Heart left ventricle (tissue), 16 donors: ENCODE measurements at regions of chr6 and their contacts with region 1.

Region 1: GRCh38 chr6:90296346-90297114 is at the start of gene BACH2:
- DNase-seq: peak; percentile 90 to 92 (median 91)
- ATAC-seq: peak; percentile 76 to 83 (median 82)
- H3K4me3 ChIP-seq: peak within 1 kb of the TSS; percentile 66 to 93 (median 80)
- H3K27ac ChIP-seq: peak within 1 kb of the TSS; percentile 67 to 93 (median 84)
- H3K4me1 ChIP-seq: peaks cover 0 to 17% (median 7%) of the 10 kb centered on the region in 12 donors
- H3K27me3 ChIP-seq: peaks cover 0 to 30% (median 0%) of the 10 kb centered on the region in 9 donors
- CTCF ChIP-seq: peak in 6 of 12 donors; percentile 11 to 34 (median 24)
- POLR2A ChIP-seq: peak in 1 of 2 donors; percentile 49
- total RNA-seq, gene BACH2: 0.76 to 8.4 (median 4.0) TPM

Region 2: DNA sequence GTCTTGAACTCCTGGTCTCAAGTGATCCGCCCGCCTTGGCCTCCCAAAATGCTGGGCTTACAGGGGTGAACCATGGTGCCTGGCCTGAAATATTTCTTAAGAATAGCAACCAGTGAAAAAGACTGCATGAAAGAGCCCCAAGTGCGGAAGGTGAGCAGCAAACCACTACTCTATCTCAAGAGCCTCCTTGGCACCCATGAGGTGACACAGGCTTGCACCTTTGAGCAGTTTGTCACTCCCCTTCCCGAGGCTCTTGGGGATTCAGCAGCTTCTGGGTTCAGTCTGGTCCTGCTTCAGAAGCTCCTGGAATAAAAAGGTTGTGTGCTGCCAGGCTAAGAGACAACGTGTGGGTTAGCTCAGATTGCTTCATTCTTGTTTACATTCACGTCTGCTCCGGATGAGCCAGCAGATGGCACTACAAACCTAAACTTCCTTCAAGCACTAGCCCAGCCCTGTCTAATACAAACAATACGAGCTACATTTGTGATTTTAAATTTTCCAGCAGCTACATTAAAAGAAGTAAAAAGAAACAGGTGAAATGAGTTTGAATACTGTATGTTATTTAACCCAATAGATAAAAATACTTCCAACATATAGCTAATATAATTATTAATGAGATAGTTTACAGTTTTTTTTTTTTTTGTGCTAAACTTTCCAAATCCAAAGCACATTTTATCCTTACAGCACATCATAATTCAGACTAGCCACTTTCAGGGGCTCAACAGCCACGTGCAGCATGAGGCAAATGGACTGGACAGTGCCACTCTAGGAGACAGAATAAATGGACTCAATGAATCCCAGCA is 356.1 kb before region 1 on chr6:
- intact Hi-C with region 1: loop called in 1 of 10 experiments (anchors 10 kb)
- DNase-seq: peak in 4 of 5 donors; percentile 56 to 60 (median 59)
- ATAC-seq: peak; percentile 83 to 92 (median 90)
- H3K4me3 ChIP-seq: no peak overlapping the region
- H3K27ac ChIP-seq: no peak overlapping the region
- H3K4me1 ChIP-seq: peaks cover 0 to 8% (median 0%) of the 10 kb centered on the region in 12 donors
- H3K27me3 ChIP-seq: no peaks in the 10 kb centered on the region
- CTCF ChIP-seq: peak; percentile 46 to 81 (median 70)
- POLR2A ChIP-seq: no peak

Region 3: GRCh38 chr6:89984926-89985750 is 311.4 kb before region 1 on chr6:
- intact Hi-C with region 1: loop called in 1 of 10 experiments (anchors 5 kb)
- DNase-seq: peak; percentile 89 to 94 (median 91)
- ATAC-seq: peak; percentile 88 to 96 (median 89)
- H3K4me3 ChIP-seq: peak overlapping the region in 1 of 12 donors; percentile 4
- H3K27ac ChIP-seq: peak overlapping the region in 10 of 12 donors; percentile 22 to 76 (median 67)
- H3K4me1 ChIP-seq: peaks cover 0 to 29% (median 23%) of the 10 kb centered on the region in 12 donors
- H3K27me3 ChIP-seq: no peaks in the 10 kb centered on the region
- CTCF ChIP-seq: no peak
- POLR2A ChIP-seq: no peak

Region 4: DNA sequence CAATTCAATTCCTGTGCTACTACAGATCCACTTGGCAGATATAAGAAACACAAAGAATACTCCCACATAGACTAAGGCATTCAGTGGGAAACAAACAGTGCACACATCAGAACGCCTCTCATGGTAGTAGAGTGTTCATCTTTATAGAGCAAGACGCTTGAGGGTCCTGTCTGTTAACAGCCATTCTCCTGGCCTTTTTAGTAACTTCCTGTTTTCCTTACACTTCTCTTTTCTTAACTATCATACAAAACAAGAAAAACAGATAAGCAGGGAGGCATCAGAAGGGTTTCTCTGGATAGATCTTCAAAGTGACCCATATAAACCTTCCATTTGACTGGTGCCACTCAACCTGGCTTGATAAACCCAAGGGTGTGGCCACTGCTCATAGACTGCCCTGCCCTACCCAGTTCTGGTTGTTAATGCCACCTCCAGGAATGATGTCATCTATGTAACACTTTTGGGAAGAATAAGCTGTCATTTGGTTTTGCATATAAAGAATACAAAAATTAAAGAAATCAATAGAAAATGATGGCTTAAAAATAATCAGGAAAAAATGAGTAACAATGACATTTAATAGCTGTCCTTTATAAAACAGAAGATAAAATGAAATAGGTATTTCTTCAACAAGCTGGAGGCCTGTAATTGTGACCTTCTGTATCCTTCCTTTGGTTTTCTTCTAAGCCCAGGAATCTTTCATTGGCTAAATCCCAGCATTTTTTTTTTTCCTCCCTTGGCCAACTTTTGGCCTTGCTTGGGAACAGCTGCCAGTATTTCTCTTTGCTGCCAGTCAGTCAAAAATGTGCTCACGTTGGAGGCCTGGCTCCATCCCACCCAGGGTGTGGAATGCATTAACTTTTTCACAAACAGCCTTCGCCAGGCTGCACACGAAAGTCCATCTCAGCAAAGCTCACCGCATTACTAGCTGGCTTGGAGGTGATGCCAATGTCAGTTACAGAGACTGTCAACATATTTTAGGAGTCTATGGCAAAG is 298.8 kb before region 1 on chr6:
- intact Hi-C with region 1: no loop called
- DNase-seq: no peak
- ATAC-seq: peak in 2 of 4 donors; percentile 18 to 36
- H3K4me3 ChIP-seq: no peak overlapping the region
- H3K27ac ChIP-seq: no peak overlapping the region
- H3K4me1 ChIP-seq: peaks cover 0 to 39% (median 23%) of the 10 kb centered on the region in 12 donors
- H3K27me3 ChIP-seq: no peaks in the 10 kb centered on the region
- CTCF ChIP-seq: no peak
- POLR2A ChIP-seq: no peak

Region 5: DNA sequence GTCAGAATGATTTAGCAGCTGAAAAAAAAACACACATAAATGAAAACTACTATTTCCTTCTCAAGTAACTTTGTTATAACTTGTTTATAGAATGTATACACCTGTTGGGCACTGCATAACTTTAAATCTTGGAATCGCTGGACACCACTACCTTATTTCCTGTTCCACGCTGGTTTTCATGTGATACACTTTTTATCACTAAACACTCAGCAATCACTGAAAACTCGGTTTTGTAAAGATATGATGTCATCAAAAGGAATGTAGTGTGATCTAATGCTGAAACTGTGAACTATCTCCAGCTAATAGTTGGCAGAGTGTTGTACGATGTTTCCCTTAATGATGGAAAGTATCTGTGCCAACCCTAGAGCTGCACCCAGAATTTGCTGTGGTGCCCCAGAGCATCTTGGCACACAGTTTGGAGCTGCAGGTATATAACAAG is 127.8 kb before region 1 on chr6:
- intact Hi-C with region 1: loop called in 1 of 10 experiments (anchors 5 kb)
- DNase-seq: no peak
- ATAC-seq: peak in 3 of 4 donors; percentile 52 to 65 (median 56)
- H3K4me3 ChIP-seq: no peak overlapping the region
- H3K27ac ChIP-seq: peak overlapping the region in 10 of 12 donors; percentile 45 to 78 (median 69)
- H3K4me1 ChIP-seq: peaks cover 0 to 19% (median 12%) of the 10 kb centered on the region in 12 donors
- H3K27me3 ChIP-seq: no peaks in the 10 kb centered on the region
- CTCF ChIP-seq: no peak
- POLR2A ChIP-seq: no peak

Region 6: DNA sequence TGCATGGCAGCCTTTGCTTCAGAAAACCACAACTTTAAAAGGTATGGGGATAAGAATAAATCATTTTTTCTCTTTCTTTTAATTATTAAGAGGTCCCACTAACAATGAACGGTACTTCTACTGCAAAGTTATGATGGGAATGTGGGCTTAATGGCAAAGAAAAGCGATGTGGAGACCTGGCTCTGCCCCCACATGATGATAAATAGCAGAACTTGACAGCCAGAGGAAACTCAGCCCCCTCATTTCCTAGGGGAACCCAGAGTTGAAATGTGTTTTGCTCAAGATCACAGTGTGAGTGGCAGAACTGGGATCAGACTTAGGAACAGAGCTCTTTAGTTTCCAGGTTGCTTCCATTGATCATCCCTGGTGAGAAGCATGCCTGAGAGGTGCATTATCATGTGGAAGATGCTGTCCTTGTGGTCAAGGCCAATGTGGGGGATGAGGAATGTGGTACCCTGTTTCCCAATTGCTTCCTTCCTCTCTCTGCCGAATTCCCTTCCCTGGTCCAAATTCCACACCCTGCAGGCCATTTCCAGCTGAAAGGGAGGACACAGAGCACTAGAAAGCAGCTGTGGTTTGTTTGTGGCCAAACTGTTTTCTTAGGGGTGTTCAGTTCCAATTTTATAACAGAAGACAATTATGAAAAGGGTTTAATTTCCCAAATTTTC is 65.8 kb before region 1 on chr6:
- intact Hi-C with region 1: loop called in 2 of 10 experiments (anchors 5 to 10 kb)
- DNase-seq: no peak
- ATAC-seq: peak in 3 of 4 donors; percentile 40 to 52 (median 52)
- H3K4me3 ChIP-seq: no peak overlapping the region
- H3K27ac ChIP-seq: peak overlapping the region in 3 of 12 donors; percentile 16 to 38 (median 26)
- H3K4me1 ChIP-seq: peaks cover 0 to 48% (median 24%) of the 10 kb centered on the region in 12 donors
- H3K27me3 ChIP-seq: no peaks in the 10 kb centered on the region
- CTCF ChIP-seq: no peak
- POLR2A ChIP-seq: no peak

Region 7: GRCh38 chr6:90393232-90393884 is 96.8 kb after region 1 on chr6:
- intact Hi-C with region 1: loop called in 3 of 10 experiments (anchors 5 kb)
- DNase-seq: peak in 3 of 5 donors; percentile 43 to 53 (median 51)
- ATAC-seq: peak; percentile 62 to 77 (median 72)
- H3K4me3 ChIP-seq: no peak overlapping the region
- H3K27ac ChIP-seq: no peak overlapping the region
- H3K4me1 ChIP-seq: peaks cover 0 to 11% (median 0%) of the 10 kb centered on the region in 12 donors
- H3K27me3 ChIP-seq: no peaks in the 10 kb centered on the region
- CTCF ChIP-seq: peak; percentile 67 to 84 (median 76)
- POLR2A ChIP-seq: no peak